MCF 10A (cell line): ENCODE measurements at regions of chr14 and their contacts with region 1.

Region 1: DNA sequence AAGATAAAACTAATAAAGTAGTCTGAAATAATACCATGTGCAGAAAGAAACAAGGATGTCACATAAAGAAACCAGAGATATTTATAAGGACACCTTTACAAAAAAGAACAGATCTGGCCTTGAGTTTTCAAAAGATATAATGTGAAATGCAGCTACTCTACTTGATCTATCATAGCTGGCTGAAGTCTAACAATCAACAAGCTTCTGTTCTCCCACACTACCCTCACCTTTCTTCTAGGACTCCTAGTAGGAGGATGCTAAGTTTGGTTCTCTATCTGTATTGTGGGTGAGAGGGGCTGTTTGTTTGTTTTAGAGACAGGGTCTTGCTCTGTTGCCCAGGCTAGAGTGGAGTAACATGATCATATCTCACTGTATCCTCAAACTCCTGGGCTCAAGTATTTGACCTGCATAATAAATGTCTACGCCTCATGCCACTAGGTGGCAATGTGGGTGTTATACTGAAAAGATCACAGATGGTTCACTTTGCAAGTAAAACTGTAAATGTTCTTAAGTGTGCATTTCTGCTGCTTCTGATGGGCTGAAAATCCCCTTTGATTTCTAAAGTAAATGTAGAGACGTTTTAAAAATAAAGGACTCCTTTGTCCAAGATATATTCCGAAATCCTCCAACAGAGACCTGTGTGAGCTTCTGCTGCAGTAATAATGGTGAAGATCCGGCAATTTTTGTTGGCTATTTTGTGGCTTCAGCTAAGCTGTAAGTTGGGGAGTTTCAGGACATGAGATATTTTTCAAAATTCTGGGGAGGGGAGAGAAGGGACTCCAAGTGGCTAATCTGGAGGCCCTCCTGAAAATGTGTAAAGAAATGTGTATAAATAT is 269.3 kb downstream of the DAD1 start:
- DNase-seq: peak; percentile 62
- H3K4me3 Mint-ChIP-seq: no peak overlapping the region
- H3K27ac Mint-ChIP-seq: no peak overlapping the region
- H3K4me1 Mint-ChIP-seq: peaks cover 6% of the 10 kb centered on the region
- H3K27me3 Mint-ChIP-seq: peaks cover 13% of the 10 kb centered on the region
- CTCF ChIP-seq: peak; percentile 68

Region 2: GRCh38 chr14:22163051-22163450 is 156.7 kb before region 1 on chr14:
- CTCF ChIA-PET with region 1: interaction called, 10 read pairs
- POLR2A ChIA-PET with region 1: no interaction called
- intact Hi-C with region 1: no loop called
- DNase-seq: peak; percentile 18
- H3K4me3 Mint-ChIP-seq: no peak overlapping the region
- H3K27ac Mint-ChIP-seq: no peak overlapping the region
- H3K4me1 Mint-ChIP-seq: peaks cover 14% of the 10 kb centered on the region
- H3K27me3 Mint-ChIP-seq: peaks cover 24% of the 10 kb centered on the region
- CTCF ChIP-seq: peak; percentile 32

Region 3: DNA sequence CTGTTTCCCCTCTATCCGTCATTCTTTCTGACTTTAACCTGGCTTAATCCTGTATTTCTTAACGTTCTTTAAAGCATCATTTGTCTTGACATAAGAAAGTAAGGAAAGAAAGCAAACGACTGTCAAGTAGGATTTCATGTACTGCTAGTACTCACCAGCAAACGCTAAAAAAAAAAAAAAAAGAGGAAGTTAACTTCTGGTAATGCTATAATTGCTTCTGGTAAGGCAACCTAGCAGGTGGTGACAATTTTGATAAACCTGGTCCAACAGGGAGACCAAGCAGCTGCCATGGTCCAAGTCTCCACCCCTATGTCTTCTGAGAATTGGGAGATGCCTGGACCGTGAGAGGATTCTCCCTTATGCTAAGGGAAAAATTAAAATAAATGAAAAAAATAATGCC is 37.3 kb before region 1 on chr14:
- CTCF ChIA-PET with region 1: interaction called, 14 read pairs
- POLR2A ChIA-PET with region 1: no interaction called
- intact Hi-C with region 1: no loop called
- DNase-seq: no peak
- H3K4me3 Mint-ChIP-seq: no peak overlapping the region
- H3K27ac Mint-ChIP-seq: no peak overlapping the region
- H3K4me1 Mint-ChIP-seq: peaks cover under 1% of the 10 kb centered on the region
- H3K27me3 Mint-ChIP-seq: no peaks in the 10 kb centered on the region
- CTCF ChIP-seq: no peak

Region 4: GRCh38 chr14:22333422-22334276 is 13.9 kb after region 1 on chr14:
- CTCF ChIA-PET with region 1: interaction called, 46 read pairs
- POLR2A ChIA-PET with region 1: no interaction called
- intact Hi-C with region 1: no loop called
- DNase-seq: peak; percentile 55
- H3K4me3 Mint-ChIP-seq: peak overlapping the region; percentile 29
- H3K27ac Mint-ChIP-seq: no peak overlapping the region
- H3K4me1 Mint-ChIP-seq: no peaks in the 10 kb centered on the region
- H3K27me3 Mint-ChIP-seq: no peaks in the 10 kb centered on the region
- CTCF ChIP-seq: no peak

Region 5: GRCh38 chr14:22380571-22381407 is 61.0 kb after region 1 on chr14:
- CTCF ChIA-PET with region 1: interaction called, 294 read pairs
- POLR2A ChIA-PET with region 1: interaction called, 24 read pairs
- intact Hi-C with region 1: loop called (anchors 1 kb)
- DNase-seq: no peak
- H3K4me3 Mint-ChIP-seq: no peak overlapping the region
- H3K27ac Mint-ChIP-seq: peak overlapping the region; percentile 35
- H3K4me1 Mint-ChIP-seq: no peaks in the 10 kb centered on the region
- H3K27me3 Mint-ChIP-seq: peaks cover 20% of the 10 kb centered on the region
- CTCF ChIP-seq: no peak

Region 6: GRCh38 chr14:22472935-22473854 is 153.5 kb after region 1 on chr14:
- CTCF ChIA-PET with region 1: interaction called, 24 read pairs
- POLR2A ChIA-PET with region 1: no interaction called
- intact Hi-C with region 1: loop called (anchors 2 kb)
- DNase-seq: peak; percentile 56
- H3K4me3 Mint-ChIP-seq: no peak overlapping the region
- H3K27ac Mint-ChIP-seq: no peak overlapping the region
- H3K4me1 Mint-ChIP-seq: peaks cover 17% of the 10 kb centered on the region
- H3K27me3 Mint-ChIP-seq: no peaks in the 10 kb centered on the region
- CTCF ChIP-seq: peak; percentile 60

Region 7: GRCh38 chr14:22829661-22830442 is 510.1 kb after region 1 on chr14 and contains the start of gene MRPL52:
- CTCF ChIA-PET with region 1: no interaction called
- POLR2A ChIA-PET with region 1: no interaction called
- intact Hi-C with region 1: no loop called
- DNase-seq: peak; percentile 88
- H3K4me3 Mint-ChIP-seq: peak within 1 kb of the TSS; percentile 95
- H3K27ac Mint-ChIP-seq: peak within 1 kb of the TSS; percentile 76
- H3K4me1 Mint-ChIP-seq: peaks cover 9% of the 10 kb centered on the region
- H3K27me3 Mint-ChIP-seq: no peaks in the 10 kb centered on the region
- CTCF ChIP-seq: no peak
- total RNA-seq, gene MRPL52: 172 and 186 TPM in 2 replicates